ENCODE measurements at regions of chr1 and their contacts with region 1.

Region 1: DNA sequence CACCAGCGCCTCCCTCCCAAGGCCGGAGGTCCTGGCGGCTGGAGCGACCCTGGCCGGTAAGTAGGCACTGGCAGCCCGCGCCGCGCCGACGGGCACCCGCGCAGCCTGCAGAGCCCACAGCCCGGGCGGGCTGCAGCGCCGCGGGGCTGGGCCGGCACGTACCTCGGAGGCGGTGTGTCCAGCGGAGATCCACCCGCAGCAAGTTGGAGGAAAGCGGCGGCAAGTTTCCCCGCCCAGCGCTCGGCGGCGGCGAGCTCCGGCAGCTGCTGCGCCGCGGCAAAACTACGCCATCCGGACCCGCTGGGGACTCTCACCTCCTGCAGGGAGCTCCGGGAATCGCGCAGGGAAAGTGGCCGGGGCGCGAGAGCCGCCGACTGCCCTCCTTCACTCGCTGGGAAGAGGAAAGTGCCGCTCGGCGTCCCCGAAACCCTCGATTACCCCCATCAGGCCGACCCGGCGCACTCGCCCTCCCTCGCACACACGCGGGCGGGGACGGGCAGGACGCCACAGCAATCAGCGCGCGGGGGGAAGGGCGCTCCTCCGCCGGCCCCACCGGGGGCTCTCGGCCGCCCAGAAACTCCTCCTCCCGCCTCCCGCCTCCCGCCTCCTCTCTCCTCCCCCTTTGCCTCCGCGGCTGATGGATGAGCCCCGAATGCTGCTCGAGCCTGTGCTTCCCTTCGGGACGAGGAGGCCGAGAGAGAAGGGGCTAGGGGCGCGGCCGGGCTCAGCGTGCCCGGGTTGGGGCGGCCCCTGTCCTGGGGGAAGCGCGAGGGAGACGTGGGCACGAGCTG is at the start of gene TGFBR3:
- DNase-seq: peak; percentile 93
- H3K4me3 ChIP-seq: peak within 1 kb of the TSS; percentile 66 to 96 (median 88)
- H3K27ac ChIP-seq: peak within 1 kb of the TSS; percentile 71
- H3K4me1 ChIP-seq: peaks cover 14% of the 10 kb centered on the region
- H3K27me3 ChIP-seq: no peaks in the 10 kb centered on the region
- CTCF ChIP-seq: peak; percentile 34 to 59
- POLR2A ChIP-seq: peak; percentile 78
- total RNA-seq, gene TGFBR3: 10.5 and 13.4 TPM in 2 replicates

Region 2: GRCh38 chr1:91500756-91501522 is 385.0 kb before region 1 on chr1 and contains the start of gene CDC7:
- CTCF ChIA-PET with region 1: interaction called, 5 read pairs
- POLR2A ChIA-PET with region 1: no interaction called
- dilution Hi-C with region 1: no loop called
- intact Hi-C with region 1: loop called (anchors 1 kb)
- DNase-seq: peak; percentile 96
- H3K4me3 ChIP-seq: peak within 1 kb of the TSS; percentile 60 to 89 (median 62)
- H3K27ac ChIP-seq: peak within 1 kb of the TSS; percentile 91
- H3K4me1 ChIP-seq: peaks cover 16% of the 10 kb centered on the region
- H3K27me3 ChIP-seq: no peaks in the 10 kb centered on the region
- CTCF ChIP-seq: peak; percentile 51 to 54
- POLR2A ChIP-seq: peak; percentile 61
- total RNA-seq, gene CDC7: 11.7 and 13.4 TPM in 2 replicates

Region 3: GRCh38 chr1:91635763-91636162 is 250.1 kb before region 1 on chr1:
- CTCF ChIA-PET with region 1: interaction called, 6 read pairs
- POLR2A ChIA-PET with region 1: no interaction called
- dilution Hi-C with region 1: no loop called
- intact Hi-C with region 1: loop called (anchors 5 kb)
- DNase-seq: no peak
- H3K4me3 ChIP-seq: no peak overlapping the region
- H3K27ac ChIP-seq: no peak overlapping the region
- H3K4me1 ChIP-seq: peaks cover 15% of the 10 kb centered on the region
- H3K27me3 ChIP-seq: no peaks in the 10 kb centered on the region
- CTCF ChIP-seq: no peak
- POLR2A ChIP-seq: no peak

Region 4: GRCh38 chr1:91697416-91697815 is 188.5 kb before region 1 on chr1:
- CTCF ChIA-PET with region 1: no interaction called
- POLR2A ChIA-PET with region 1: no interaction called
- dilution Hi-C with region 1: no loop called
- intact Hi-C with region 1: no loop called
- DNase-seq: no peak
- H3K4me3 ChIP-seq: no peak overlapping the region
- H3K27ac ChIP-seq: no peak overlapping the region
- H3K4me1 ChIP-seq: peaks cover 29% of the 10 kb centered on the region
- H3K27me3 ChIP-seq: no peaks in the 10 kb centered on the region
- CTCF ChIP-seq: no peak
- POLR2A ChIP-seq: no peak

Region 5: GRCh38 chr1:91781371-91781825 is 104.5 kb before region 1 on chr1:
- CTCF ChIA-PET with region 1: interaction called, 8 read pairs
- POLR2A ChIA-PET with region 1: no interaction called
- dilution Hi-C with region 1: no loop called
- intact Hi-C with region 1: loop called (anchors 1 kb)
- DNase-seq: peak; percentile 94
- H3K4me3 ChIP-seq: no peak overlapping the region
- H3K27ac ChIP-seq: peak overlapping the region; percentile 54
- H3K4me1 ChIP-seq: peaks cover 40% of the 10 kb centered on the region
- H3K27me3 ChIP-seq: no peaks in the 10 kb centered on the region
- CTCF ChIP-seq: no peak
- POLR2A ChIP-seq: no peak

Region 6: DNA sequence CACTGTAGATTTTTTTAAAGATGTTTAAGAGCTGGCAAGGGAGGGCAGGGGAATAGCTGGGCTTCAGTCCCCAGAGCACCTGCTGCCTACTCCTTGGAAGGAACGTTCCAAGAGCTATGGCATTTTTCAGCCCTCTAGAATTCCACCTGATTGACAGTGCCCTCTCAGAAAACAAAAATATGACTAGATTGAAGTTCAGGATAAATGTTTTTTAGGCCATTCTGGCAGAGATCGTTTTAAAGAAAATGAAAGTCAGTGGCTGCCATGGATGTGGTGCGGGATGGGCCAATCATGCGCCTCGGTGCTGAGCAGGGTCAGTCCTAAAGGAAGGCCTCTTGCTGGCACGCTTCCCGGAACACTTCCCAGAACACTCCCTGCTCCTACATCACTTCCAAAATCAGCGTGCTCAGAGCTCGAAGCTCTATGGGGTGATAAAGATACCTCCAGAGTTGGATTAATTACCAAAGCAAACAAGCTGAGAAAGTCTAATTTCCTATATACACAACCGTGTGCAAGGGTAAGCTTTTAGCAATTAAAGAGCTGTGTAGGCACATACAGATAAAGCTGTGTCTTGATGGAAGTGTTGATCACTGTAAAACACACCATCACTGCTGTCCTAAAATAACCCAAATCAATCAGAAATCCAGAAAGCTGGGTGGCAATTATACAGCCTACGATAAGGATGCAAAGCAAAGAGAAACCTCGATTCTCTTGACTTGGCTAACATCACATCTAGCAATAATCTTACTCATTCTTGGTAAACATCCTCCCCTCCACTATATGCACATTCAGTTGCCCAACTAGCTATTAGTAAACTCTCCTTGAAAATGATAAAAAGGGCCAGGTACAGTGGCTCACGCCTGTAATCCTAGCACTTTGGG is 34.5 kb before region 1 on chr1:
- CTCF ChIA-PET with region 1: interaction called, 10 read pairs
- POLR2A ChIA-PET with region 1: interaction called, 3 read pairs
- dilution Hi-C with region 1: no loop called
- intact Hi-C with region 1: no loop called
- DNase-seq: peak; percentile 85
- H3K4me3 ChIP-seq: peak overlapping the region; percentile 12 to 52 (median 19)
- H3K27ac ChIP-seq: peak overlapping the region; percentile 42
- H3K4me1 ChIP-seq: peaks cover 15% of the 10 kb centered on the region
- H3K27me3 ChIP-seq: no peaks in the 10 kb centered on the region
- CTCF ChIP-seq: no peak
- POLR2A ChIP-seq: no peak

Region 7: DNA sequence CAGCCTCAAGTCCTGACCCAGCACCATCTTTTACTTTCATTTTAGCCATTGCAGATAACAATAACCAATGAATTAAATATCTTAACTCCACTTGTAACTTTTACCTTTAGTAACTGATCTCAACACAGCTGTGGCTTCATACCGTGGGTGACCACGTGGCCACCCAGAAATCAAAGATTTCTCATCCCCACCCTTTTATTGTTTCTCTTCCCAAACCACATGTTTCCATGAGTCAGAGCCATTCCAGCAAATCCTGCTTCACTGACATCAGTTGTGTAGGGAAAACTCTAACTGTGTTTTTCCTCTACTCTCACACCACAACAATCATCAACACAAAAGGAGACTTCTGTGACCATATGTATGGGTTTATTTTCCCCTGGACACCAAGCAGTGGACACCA is 38.2 kb after region 1 on chr1:
- CTCF ChIA-PET with region 1: interaction called, 12 read pairs
- POLR2A ChIA-PET with region 1: interaction called, 4 read pairs
- dilution Hi-C with region 1: no loop called
- intact Hi-C with region 1: loop called (anchors 2 kb)
- DNase-seq: peak; percentile 37
- H3K4me3 ChIP-seq: no peak overlapping the region
- H3K27ac ChIP-seq: no peak overlapping the region
- H3K4me1 ChIP-seq: peaks cover 2% of the 10 kb centered on the region
- H3K27me3 ChIP-seq: no peaks in the 10 kb centered on the region
- CTCF ChIP-seq: no peak
- POLR2A ChIP-seq: no peak

Region 8: DNA sequence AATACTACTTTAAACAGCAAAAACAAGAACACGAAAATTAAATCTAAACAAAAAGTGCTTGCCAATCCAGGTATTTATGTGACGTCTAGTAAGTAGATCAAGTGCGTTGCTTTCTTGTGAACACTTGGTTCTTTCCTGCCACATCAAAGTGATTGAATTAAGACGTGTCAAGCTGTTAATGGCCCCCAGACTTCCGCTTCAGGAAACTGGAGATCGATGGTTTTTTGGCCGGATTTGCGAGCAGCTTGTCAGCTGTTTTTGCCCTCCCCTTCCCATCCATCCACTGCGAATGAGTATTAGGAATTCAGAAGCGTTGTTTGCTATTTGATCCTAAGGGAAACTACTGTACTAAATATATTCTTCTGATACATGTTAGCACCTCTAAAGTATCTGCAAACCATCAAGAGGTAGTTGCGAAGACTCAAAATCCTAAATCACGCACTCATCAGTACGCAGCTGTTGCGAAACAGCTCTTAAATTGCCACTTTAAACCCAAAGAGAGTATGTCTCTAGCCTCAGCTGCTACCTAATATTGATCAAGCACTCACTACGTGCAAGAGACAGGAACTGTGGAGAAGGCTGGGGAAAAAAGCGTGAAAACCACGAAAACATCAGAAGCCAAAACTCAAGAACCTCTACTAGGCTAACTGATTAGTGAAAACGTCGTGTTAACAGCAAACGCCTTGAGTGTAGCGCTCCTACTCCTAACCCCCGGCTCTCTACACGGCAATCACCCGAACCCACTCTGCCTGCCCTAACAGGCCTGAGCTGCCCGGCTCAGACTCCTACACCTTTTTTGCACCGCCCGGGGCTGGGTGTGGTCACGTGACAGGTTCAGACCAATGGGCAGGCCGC is 62.8 kb after region 1 on chr1:
- CTCF ChIA-PET with region 1: no interaction called
- POLR2A ChIA-PET with region 1: no interaction called
- dilution Hi-C with region 1: no loop called
- intact Hi-C with region 1: no loop called
- DNase-seq: no peak
- H3K4me3 ChIP-seq: no peak overlapping the region
- H3K27ac ChIP-seq: no peak overlapping the region
- H3K4me1 ChIP-seq: peaks cover 3% of the 10 kb centered on the region
- H3K27me3 ChIP-seq: no peaks in the 10 kb centered on the region
- CTCF ChIP-seq: no peak
- POLR2A ChIP-seq: no peak